ENCODE measurements at regions of chr12 and their contacts with region 1.

Region 1: GRCh38 chr12:108468201-108468968 is 46.7 kb upstream of the FICD start:
- DNase-seq: no peak
- ATAC-seq: no peak

Region 2: GRCh38 chr12:108099073-108099472 is 369.3 kb before region 1 on chr12:
- intact Hi-C with region 1: loop called in 1 of 2 experiments (anchors 10 kb)
- DNase-seq: no peak
- ATAC-seq: no peak

Region 3: DNA sequence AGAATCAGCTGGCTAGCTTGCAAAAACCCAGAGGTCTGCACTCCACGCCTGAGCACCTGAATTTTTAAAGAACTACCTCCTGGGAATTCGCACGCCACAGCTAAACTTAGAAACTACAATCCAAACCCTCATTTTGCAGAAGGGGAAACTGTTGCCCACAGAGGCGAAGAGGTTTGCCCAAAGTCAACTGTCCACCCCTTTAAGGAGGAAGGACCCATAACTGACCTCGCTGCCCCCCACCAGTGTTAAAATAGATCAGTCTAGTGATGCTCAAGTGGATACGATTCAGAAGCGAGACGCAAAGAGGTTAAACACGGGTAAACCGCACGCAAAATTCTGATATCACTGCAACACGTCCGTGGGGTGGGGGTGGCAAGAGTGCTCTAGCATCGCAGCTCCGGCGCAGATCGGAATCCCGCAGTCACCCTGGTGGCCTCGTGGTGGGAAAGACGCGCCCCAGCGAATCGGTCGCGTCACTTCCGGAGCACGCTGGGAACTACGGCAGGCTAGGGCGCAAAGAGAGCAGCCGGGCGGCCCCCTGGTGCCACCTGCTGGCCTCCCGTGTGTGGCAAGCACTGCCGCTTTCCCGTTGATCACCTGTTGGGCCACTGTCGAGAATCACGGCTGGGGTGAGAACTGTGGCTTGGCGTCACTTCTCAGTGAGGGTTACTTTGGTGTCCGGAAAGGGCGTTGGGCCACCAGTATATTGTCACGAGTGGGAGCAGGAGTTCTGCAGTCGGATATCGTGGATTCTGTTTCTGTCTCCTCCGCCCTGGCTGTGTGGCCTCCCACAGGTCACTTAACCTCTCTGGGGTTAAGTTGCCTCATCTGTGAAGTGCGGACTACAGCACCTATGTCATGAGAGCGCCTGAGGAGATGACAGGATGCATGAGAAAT is 624.9 kb after region 1 on chr12 and contains the start of gene ALKBH2:
- intact Hi-C with region 1: no loop called
- DNase-seq: peak; percentile 96
- ATAC-seq: peak; percentile 74 to 77
- total RNA-seq, gene ALKBH2: 8.5 to 12.0 TPM